Left cardiac atrium (tissue), 4 donors: ENCODE measurements at regions of chr4 and their contacts with region 1.

Region 1: GRCh38 chr4:105146276-105147015 is at the start of gene TET2:
- DNase-seq: peak; percentile 84
- ATAC-seq: peak; percentile 89 to 91
- total RNA-seq, gene TET2: 17.3 to 19.6 TPM

Region 2: DNA sequence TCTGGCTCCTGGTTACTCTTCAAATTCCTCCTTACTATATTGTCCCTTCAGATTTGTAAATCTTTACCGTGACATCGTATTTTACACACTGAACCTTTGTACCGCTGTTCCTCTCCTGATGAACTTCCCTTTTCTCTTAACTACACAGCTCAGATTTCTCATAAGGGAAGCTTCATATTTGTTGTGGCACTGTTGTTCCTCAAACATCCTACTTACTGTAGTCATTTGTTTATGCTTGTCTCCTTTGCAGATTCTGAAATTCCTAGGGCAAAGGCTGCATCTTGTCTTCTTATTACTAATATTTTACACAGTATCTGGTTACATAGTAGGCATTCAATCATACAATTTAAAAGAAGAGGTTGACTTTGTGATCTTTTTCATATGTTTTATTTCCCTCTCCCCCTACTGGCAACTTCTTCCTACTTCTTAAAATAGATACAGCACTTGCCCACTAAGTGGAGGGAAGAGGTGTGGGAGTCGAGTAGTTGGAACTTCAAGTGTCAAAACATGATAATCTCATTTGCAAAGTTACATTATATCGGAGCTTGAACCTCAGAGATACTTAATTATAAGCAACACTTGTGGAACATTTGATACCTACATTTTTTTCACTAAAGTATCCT is 50.2 kb after region 1 on chr4:
- intact Hi-C with region 1: loop called in 1 of 2 experiments (anchors 5 kb)
- DNase-seq: no peak
- ATAC-seq: peak; percentile 65 to 84

Region 3: DNA sequence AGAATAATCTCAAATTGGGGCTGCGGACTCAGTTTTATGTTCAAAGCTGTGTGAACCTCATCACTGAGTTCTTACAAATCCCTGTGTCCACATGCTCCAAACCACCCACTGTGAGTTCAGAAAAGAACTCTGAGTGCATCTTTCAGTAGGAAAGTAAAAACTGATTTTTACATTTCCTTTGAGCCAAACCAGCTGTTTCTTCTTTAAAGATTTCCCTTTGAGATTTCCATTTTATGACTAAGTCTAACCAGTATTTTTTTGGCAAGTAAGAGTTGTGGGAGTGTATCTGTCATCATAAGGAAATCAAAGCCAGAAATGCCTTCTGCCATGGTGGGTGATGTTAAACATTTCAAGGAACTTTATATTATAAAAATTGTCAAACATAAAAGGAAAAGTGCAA is 100.3 kb after region 1 on chr4:
- intact Hi-C with region 1: loop called in 1 of 2 experiments (anchors 10 kb)
- DNase-seq: no peak
- ATAC-seq: peak; percentile 30 to 78

Region 4: GRCh38 chr4:105399532-105400161 is 253.2 kb after region 1 on chr4:
- intact Hi-C with region 1: no loop called
- DNase-seq: no peak
- ATAC-seq: no peak